ENCODE measurements at regions of chr18 and their contacts with region 1.

Region 1: GRCh38 chr18:47930931-47931717 is 665 bp upstream of the SMAD2 start:
- DNase-seq: peak; percentile 96
- H3K4me3 Mint-ChIP-seq: peak overlapping the region; percentile 75
- H3K27ac Mint-ChIP-seq: peak overlapping the region; percentile 86
- H3K4me1 Mint-ChIP-seq: peaks cover 35% of the 10 kb centered on the region
- H3K27me3 Mint-ChIP-seq: no peaks in the 10 kb centered on the region

Region 2: DNA sequence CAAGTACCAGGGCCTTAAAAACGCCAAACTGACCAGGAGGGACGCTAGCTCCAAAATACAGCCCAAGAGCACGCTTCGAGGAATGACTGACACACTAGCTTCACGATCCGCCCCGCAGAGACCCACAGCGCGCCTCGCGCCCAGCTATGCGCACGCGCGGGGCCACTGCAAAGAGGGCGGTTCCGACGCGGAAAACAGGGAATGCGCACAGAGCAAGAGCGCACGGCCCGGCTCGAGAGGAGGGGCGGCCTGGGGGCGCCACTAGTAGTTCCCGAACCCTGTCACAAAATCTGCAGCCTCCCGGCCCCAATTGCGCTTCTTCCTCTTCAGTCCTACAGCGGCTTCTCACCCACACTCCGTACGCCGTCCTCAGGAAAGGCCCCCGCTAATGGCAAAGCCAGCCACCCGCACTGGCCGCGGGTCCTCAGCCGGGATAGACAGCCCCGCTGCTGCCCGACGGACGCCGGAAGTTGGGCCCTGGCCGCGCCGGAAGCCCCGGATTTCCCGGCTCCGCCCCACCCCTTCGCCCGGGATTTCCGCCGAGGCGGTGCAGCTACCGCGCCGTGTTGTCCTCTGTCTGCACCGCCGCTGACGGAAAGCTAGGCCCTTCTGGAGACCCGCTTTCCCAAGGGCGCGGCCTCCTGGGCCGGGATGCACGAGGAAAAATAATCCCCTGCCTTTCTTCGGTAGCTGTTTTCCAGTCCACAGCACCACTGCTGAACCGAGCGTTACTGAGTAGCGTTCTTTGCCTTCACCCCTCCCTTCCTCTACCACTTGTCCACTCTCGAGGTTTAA is 780.9 kb before region 1 on chr18 and contains the start of gene HDHD2:
- CTCF ChIA-PET with region 1: no interaction called
- POLR2A ChIA-PET with region 1: no interaction called
- intact Hi-C with region 1: loop called (anchors 2 kb)
- DNase-seq: peak; percentile 88
- H3K4me3 Mint-ChIP-seq: peak within 1 kb of the TSS; percentile 89
- H3K27ac Mint-ChIP-seq: peak within 1 kb of the TSS; percentile 91
- H3K4me1 Mint-ChIP-seq: peaks cover 33% of the 10 kb centered on the region
- H3K27me3 Mint-ChIP-seq: no peaks in the 10 kb centered on the region
- total RNA-seq, gene HDHD2: 26.4 to 32.9 TPM

Region 3: DNA sequence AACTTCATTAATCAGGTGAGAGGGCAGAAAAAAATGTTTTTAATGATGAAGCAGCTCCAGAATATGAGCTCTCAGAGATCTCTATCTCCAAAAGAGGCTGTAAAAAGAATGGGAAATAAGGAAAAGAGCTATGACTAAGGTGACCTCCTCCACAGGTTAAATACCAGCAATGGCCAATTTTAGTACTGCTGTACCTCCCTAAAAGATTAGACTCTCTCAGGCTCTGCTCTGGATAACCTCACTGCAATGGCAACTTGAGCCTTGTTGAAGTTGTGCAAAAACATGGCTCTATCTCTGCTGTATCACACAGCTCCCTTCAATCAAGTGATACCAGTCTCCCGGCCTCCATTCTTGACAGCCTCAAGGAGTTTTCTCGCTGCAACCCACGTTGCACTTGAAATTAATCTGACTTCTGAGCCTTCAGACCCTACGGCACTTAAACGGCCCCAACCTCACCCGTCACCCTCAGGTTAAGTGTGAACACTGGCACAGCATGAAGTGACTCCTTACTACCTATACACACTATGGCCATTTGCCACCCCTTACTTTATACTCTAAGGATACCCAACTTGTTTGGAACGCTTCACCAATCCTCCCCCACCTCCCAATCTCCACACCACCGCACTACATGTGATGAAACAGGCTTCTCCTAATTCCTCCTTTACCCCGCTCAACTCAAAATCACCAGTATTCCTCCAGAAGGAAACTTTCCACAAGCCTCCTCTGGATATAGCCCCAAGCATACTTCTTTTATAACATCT is 37.0 kb before region 1 on chr18:
- CTCF ChIA-PET with region 1: no interaction called
- POLR2A ChIA-PET with region 1: interaction called, 3 read pairs
- intact Hi-C with region 1: loop called (anchors 5 kb)
- DNase-seq: no peak
- H3K4me3 Mint-ChIP-seq: no peak overlapping the region
- H3K27ac Mint-ChIP-seq: no peak overlapping the region
- H3K4me1 Mint-ChIP-seq: peaks cover 55% of the 10 kb centered on the region
- H3K27me3 Mint-ChIP-seq: no peaks in the 10 kb centered on the region

Region 4: DNA sequence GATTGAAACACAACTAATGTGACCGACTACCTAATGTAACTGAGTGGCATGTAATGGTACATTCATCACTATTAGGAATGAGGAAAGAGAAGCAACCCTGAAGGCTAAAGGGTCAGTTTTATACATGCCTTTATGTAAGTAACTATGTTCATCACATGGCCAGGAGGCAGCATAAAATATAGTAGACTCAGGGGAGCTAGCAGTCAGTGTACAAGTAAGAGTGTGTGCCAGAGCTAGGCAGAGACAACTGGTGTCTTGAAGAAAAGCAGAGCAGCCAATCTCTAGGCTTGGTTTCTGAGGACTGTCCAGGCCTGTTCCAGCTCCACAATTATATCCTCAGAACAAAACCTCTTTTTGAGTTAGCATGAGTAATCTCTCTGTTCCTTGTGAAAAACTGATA is 18.8 kb before region 1 on chr18:
- CTCF ChIA-PET with region 1: interaction called, 3 read pairs
- POLR2A ChIA-PET with region 1: interaction called, 24 read pairs
- intact Hi-C with region 1: loop called (anchors 1 kb)
- DNase-seq: peak; percentile 51
- H3K4me3 Mint-ChIP-seq: peak overlapping the region; percentile 45
- H3K27ac Mint-ChIP-seq: peak overlapping the region; percentile 90
- H3K4me1 Mint-ChIP-seq: peaks cover 98% of the 10 kb centered on the region
- H3K27me3 Mint-ChIP-seq: no peaks in the 10 kb centered on the region

Region 5: DNA sequence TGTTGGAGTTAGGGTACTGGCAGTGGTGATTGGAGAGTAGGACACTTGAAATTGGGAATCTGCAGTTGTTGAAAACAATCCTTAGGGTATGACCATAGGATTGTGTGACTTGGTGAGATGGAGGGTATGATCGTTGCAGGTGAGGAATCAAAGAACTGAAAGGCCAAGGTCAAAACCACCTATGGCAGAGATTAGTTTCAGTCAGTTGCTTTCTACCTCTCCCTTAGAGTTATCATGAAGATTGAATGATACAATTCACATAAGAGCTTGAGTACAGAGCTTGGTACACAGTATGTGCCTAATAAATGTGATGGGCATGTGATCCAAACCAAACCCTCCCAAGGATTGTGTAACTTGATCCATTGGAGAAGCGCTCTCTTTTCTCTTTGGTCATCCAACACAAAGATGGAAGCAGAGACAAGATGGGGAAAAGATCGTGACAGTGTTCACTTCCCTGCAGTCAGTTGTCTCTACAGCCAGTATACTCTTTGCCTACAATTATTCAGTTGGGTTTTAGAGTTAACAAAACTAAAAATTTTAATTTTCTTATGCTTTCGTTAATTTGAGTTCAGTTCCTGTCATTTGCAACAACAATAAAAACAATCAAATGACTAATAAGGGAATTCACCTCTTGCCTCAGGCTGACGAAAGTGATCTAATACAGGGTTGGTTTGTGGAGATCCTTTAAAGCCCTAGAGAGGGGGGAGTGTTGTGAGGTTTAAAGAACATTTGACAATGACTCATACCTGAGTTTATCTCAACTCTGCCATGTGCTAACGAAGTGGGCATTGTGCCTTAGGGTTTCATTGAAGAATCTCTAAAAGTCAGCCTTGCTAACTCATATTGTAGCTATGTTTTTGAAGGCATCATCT is 14.1 kb after region 1 on chr18:
- CTCF ChIA-PET with region 1: interaction called, 3 read pairs
- POLR2A ChIA-PET with region 1: no interaction called
- intact Hi-C with region 1: loop called (anchors 1 kb)
- DNase-seq: no peak
- H3K4me3 Mint-ChIP-seq: no peak overlapping the region
- H3K27ac Mint-ChIP-seq: no peak overlapping the region
- H3K4me1 Mint-ChIP-seq: peaks cover 13% of the 10 kb centered on the region
- H3K27me3 Mint-ChIP-seq: peaks cover 14% of the 10 kb centered on the region

Region 6: DNA sequence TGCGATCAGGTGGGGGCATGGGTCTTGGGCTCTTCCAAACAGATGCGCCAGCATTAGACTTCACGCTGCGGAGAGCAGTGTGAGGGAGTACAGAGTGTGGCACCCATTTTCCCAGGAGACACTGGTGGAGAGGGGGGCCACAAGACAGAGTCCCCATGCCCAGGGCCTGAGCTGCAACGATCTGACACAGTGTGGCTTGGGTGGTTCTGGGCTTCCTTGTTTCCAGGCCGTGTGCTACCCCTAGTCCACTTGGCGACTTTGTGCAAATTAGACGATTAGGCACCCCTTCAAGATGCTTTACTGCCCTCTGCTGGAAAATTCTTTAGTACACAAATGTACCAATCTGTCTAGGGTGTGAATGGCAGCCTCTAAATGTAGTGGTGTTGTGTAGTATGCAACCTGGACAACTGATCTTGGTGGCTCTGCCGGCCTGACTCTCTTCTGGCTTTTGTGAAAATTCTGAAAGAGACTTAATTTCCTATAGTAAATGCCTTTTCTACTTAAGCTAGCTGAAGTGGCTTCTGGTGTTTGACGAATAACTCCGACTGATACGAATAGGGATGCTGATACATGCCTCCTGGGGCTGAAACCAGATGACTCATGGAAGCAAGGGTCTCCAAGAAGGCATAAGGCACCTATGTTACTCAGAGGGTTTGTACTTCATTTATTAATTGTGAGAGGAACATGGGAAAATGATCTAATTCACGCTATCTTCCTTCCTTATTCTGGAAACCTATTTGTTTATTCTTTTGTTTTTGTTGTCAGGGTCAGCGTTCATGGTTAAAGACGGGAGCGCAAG is 91.6 kb after region 1 on chr18:
- CTCF ChIA-PET with region 1: no interaction called
- POLR2A ChIA-PET with region 1: no interaction called
- intact Hi-C with region 1: loop called (anchors 2 kb)
- DNase-seq: no peak
- H3K4me3 Mint-ChIP-seq: no peak overlapping the region
- H3K27ac Mint-ChIP-seq: no peak overlapping the region
- H3K4me1 Mint-ChIP-seq: peaks cover 3% of the 10 kb centered on the region
- H3K27me3 Mint-ChIP-seq: peaks cover 20% of the 10 kb centered on the region

Region 7: DNA sequence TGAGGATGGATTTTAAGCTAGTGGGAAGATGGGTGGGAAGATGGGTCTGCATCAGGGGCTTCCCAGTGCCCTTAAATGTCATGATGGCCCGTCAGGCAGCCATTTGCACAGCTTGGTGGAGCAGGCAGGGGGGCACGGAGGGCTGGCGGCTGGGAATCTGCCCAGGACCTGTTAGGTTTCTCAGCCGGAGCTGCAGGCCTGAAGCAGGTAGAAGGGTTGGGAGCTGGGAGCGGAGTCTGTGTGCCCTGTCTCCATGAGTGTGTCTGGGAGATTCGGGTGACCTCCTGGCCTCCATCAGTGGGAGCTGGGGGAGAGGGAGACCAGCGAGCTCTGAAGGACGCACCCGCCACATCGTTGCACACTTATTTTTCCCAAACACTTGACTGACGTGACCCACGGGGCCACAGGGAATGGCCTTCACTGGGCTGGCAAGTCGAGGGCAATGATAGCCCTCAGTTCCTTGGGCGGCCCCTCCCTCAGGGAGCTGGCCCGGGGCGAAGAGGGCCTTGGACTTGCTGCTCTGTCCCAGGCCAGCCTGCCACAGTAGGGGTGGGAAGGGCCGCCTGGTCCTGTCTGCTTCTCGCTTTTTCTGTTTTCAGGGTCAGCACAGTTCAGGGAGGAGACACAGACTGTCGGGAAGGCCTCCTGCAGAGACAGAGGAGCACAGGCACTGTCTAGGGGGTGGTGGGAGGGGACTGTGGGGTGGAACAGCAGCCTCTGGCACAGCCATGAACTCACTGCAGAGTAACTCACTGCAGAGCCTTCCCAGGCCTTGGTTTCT is 241.3 kb after region 1 on chr18:
- CTCF ChIA-PET with region 1: no interaction called
- POLR2A ChIA-PET with region 1: no interaction called
- intact Hi-C with region 1: no loop called
- DNase-seq: no peak
- H3K4me3 Mint-ChIP-seq: no peak overlapping the region
- H3K27ac Mint-ChIP-seq: no peak overlapping the region
- H3K4me1 Mint-ChIP-seq: peaks cover 2% of the 10 kb centered on the region
- H3K27me3 Mint-ChIP-seq: peaks cover 3% of the 10 kb centered on the region

Region 8: DNA sequence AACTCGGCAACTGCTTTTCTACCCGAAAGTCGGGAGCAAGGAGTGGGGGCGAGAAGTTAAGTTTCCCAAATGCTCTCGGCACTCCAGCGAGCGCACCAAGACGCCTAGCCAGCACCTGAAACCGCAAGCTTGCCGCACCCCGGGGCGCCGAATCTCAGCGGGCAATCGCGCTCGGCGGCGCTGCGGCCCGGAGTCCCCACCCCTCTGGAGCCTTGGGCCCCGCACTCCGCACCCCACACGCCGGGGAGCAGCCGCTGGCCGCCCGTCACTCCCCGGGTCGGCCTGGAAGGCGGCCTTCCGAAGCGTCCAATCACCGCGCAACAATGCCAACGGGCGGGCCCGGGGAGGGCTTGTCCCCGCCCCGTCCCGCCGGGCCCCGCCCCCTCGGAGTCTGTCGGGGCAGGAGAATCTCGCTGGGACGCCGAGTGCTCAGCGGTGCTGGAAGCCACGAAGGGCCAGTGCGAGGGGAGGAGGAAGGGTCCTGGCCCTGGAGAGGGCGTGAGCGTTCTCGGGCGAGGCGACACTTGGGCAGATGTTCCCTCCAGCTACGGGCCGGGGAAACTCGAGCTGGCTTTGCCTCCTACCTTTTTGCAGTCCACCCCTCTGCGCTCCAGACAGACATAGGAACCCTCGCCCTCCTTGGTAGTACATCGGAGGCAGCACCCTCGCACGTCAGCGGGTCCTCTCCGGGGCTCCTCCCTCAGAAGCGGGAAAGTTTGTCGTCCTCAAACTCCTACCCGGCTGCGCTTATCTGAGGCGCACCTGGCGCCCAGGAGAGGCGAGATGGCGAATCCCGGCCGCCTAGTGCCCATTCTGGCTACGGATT is 479.2 kb after region 1 on chr18:
- CTCF ChIA-PET with region 1: no interaction called
- POLR2A ChIA-PET with region 1: no interaction called
- intact Hi-C with region 1: loop called (anchors 5 kb)
- DNase-seq: peak; percentile 83
- H3K4me3 Mint-ChIP-seq: peak overlapping the region; percentile 61
- H3K27ac Mint-ChIP-seq: no peak overlapping the region
- H3K4me1 Mint-ChIP-seq: peaks cover 9% of the 10 kb centered on the region
- H3K27me3 Mint-ChIP-seq: peaks cover 66% of the 10 kb centered on the region

Region 9: DNA sequence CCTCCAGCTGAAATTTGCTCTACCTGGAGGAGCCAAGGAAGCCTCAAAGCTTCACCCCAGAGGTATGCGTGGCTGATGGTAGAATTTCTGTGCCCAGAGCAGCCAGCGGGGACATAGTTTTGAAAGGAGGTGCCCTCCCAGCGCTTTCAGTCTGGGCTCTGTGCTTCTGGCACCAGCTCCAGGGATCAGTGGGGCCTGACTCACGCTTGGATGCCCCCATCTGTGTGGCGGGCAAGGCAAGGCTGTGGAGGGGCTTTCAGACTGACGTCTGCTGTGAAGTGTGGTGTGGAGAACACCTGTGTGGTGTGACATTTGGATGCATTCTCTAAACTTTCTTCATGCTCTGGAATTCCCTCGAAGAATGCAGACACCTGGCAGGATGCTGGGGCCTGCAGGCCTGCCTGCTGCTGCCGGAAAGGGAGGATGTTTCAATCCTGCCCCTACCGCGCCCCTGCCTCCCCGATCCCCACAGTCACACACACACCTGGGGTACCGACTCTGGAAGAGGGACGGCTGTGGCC is 691.8 kb after region 1 on chr18:
- CTCF ChIA-PET with region 1: no interaction called
- POLR2A ChIA-PET with region 1: no interaction called
- intact Hi-C with region 1: no loop called
- DNase-seq: no peak
- H3K4me3 Mint-ChIP-seq: no peak overlapping the region
- H3K27ac Mint-ChIP-seq: no peak overlapping the region
- H3K4me1 Mint-ChIP-seq: no peaks in the 10 kb centered on the region
- H3K27me3 Mint-ChIP-seq: no peaks in the 10 kb centered on the region